Pancreas (tissue), 10 donors: ENCODE measurements at regions of chr1 and their contacts with region 1.

Region 1: GRCh38 chr1:6727535-6727934 is 25.9 kb upstream of the DNAJC11 start:
- DNase-seq: peak in 4 of 6 donors; percentile 17 to 80 (median 54)
- ATAC-seq: peak in 3 of 4 donors; percentile 68 to 77 (median 68)
- H3K4me3 ChIP-seq: no peak overlapping the region
- H3K27ac ChIP-seq: no peak overlapping the region
- H3K4me1 ChIP-seq: no peaks in the 10 kb centered on the region
- H3K27me3 ChIP-seq: no peaks in the 10 kb centered on the region
- CTCF ChIP-seq: peak; percentile 61 to 83 (median 82)

Region 2: DNA sequence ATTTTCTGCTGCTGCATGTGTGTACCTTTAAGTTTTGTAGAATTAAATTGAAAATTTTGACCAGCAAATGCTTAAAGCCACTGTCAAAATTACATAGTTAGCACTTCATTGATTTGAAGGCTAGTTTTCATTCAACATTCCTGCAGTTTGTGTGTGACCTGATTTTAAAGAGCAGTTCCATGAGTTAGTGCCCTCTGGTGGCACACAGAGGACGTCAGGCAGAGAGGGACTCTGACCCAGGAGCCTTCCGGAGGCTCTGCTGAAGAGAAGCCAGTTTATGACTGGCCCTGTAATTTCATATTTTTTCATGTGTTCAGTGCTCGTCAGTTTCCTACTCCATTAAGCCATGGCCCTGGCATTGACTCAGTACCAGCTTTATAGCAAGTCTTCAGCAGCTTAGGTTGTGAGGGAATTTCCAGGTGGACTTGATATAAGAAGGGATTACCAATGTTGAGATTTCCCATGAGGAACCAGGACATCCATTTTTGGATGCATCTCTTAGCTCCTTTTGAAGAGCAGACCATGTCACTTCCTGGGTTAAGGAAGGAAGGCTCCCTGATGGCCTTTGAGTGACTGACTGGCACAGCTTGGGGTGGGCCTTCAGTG is 162.4 kb after region 1 on chr1:
- intact Hi-C with region 1: loop called in 1 of 3 experiments (anchors 10 kb)
- DNase-seq: peak in 4 of 6 donors; percentile 36 to 74 (median 50)
- ATAC-seq: peak; percentile 69 to 98 (median 94)
- H3K4me3 ChIP-seq: no peak overlapping the region
- H3K27ac ChIP-seq: no peak overlapping the region
- H3K4me1 ChIP-seq: no peaks in the 10 kb centered on the region
- H3K27me3 ChIP-seq: no peaks in the 10 kb centered on the region
- CTCF ChIP-seq: peak; percentile 63 to 86 (median 81)

Region 3: DNA sequence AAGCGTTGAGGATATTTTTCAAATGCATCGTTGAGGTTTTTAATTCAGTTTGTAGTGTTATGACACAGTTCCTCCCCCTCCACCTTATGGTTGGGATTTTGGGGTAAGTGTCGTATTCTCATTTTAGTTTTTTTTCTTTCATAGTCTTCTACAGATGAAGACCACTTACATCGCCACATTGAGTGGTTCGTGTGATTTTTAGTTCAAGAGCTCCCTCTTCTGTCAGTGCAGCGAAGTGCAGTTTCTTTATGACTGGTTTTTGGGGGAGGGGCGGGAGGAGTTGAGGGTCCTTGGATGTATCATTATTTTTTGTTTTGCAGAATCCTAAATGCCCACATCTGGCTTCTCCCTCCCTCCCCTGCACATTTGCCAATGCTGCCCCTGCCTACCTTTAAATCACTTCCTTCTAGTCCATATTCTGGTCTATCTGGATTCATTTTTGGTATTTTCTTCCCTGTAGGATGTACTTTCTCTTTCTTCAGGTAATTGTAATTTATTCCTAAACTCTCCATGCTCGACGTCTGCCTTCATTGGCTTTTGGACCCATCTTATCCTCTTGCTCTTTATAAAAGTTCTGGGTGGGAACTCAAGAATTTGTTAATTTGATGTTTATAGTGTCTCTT is 490.8 kb after region 1 on chr1:
- intact Hi-C with region 1: loop called in 2 of 3 experiments (anchors 5 to 10 kb)
- DNase-seq: peak in 1 of 6 donors; percentile 46
- ATAC-seq: peak in 2 of 4 donors; percentile 49 to 71
- H3K4me3 ChIP-seq: no peak overlapping the region
- H3K27ac ChIP-seq: no peak overlapping the region
- H3K4me1 ChIP-seq: no peaks in the 10 kb centered on the region
- H3K27me3 ChIP-seq: no peaks in the 10 kb centered on the region
- CTCF ChIP-seq: peak in 3 of 4 donors; percentile 52 to 66 (median 60)

Region 4: GRCh38 chr1:7224644-7225043 is 497.1 kb after region 1 on chr1:
- intact Hi-C with region 1: loop called in 2 of 3 experiments (anchors 5 to 10 kb)
- DNase-seq: peak in 1 of 6 donors; percentile 25
- ATAC-seq: peak in 1 of 4 donors; percentile 20
- H3K4me3 ChIP-seq: no peak overlapping the region
- H3K27ac ChIP-seq: no peak overlapping the region
- H3K4me1 ChIP-seq: no peaks in the 10 kb centered on the region
- H3K27me3 ChIP-seq: no peaks in the 10 kb centered on the region
- CTCF ChIP-seq: no peak

Region 5: DNA sequence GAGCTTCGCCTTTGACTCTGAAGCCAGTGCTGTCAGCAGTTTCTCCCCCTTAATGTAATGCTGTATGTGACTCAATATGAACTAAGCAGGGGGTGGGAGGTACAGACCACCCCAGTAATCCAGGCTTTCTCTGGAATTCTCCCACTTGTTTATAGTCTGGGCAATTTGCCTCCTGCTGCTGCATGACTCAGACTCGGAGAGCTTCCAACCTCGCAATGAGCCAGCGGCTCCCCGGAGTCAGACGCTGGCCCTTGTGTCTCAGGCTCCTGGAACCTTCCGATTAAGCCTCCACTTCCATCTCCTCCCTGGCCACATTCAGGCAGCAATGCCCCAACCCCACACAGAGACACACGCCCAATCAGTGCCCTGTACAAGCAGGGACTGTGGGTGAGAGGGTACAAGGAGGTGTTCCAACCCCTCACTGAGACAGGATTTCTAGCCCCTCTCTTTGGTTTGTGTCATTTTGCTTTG is 571.8 kb after region 1 on chr1:
- intact Hi-C with region 1: no loop called
- DNase-seq: peak in 4 of 6 donors; percentile 24 to 62 (median 36)
- ATAC-seq: peak in 3 of 4 donors; percentile 64 to 85 (median 80)
- H3K4me3 ChIP-seq: no peak overlapping the region
- H3K27ac ChIP-seq: no peak overlapping the region
- H3K4me1 ChIP-seq: no peaks in the 10 kb centered on the region
- H3K27me3 ChIP-seq: no peaks in the 10 kb centered on the region
- CTCF ChIP-seq: no peak